ENCODE measurements at regions of chr11 and their contacts with region 1.

Region 1: DNA sequence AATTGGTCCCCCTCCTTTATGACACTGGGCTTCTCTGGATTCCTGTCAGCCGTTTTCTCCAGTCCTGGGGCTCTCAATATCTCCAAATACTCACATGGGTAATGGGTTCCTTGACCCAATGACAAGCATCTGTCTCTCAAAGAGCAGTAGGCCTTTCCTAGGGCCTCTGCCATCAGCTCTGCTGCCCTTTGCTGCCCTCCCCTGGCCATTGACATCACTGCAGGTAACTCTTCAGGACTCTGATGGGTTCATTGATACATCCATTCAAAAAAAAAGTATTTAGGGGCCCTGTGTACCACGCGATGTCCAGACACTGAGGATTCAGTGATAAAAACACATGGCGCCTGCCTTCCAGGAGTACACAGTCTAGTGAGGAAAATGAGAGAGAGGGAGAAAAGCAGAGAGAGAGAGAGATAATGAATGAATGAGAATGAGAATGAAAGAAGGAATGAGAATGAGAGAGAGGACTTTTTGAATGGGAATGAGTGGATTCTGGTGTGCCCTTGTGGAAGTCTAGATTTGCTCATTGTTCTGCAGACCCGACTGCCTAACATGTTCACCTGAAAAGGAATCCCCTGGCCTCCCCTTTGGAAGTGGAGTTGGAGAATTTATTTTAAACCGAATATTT is 42.6 kb upstream of the OLFML1 start:
- DNase-seq: no peak

Region 2: GRCh38 chr11:7098235-7098832 is 344.4 kb before region 1 on chr11:
- intact Hi-C with region 1: loop called (anchors 5 kb)
- DNase-seq: no peak

Region 3: GRCh38 chr11:7143908-7144307 is 298.8 kb before region 1 on chr11:
- intact Hi-C with region 1: loop called (anchors 1 kb)
- DNase-seq: no peak

Region 4: GRCh38 chr11:7513234-7514098 is 70.8 kb after region 1 on chr11 and contains the start of gene PPFIBP2:
- intact Hi-C with region 1: loop called (anchors 5 kb)
- DNase-seq: peak; percentile 95
- total RNA-seq, gene PPFIBP2: 14.9 TPM

Region 5: DNA sequence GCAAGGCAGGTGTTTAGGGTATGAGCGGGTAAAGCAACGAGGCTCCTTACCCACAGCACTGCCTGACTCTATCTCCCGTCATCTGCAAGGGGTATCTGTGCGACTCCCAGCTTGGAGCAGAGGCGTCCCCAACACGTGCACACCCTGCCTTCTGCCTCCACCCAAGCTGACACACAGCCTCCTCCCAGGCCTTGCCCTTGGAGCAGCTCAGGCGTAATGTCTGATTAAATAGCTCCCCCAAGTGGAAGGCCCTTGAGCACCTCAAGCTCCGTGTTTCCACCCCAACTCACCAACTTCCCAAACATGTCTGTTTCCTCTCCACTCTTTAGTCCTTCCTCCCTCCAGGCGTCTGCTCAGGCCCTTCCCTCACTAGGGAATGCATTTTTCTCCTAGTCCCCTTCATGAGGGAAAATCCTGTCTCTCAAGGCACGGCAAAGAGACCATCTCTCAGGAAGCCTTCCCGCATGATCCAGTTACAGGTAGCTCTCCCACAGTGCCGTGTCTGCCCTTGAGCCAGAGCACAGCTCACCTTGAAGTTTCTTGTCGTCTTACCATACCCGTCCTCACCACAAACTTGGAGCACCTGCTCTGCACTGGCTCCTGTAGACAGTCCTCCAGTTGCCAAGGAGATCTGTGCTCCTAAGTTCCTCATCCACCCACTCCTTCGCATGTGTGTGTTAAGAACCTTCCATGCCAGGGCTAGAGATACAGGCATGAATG is 214.8 kb after region 1 on chr11:
- intact Hi-C with region 1: loop called (anchors 10 kb)
- DNase-seq: no peak

Measured in cardiac septum (tissue), 1 donor.